ENCODE measurements at regions of chr2 and their contacts with region 1.

Region 1: DNA sequence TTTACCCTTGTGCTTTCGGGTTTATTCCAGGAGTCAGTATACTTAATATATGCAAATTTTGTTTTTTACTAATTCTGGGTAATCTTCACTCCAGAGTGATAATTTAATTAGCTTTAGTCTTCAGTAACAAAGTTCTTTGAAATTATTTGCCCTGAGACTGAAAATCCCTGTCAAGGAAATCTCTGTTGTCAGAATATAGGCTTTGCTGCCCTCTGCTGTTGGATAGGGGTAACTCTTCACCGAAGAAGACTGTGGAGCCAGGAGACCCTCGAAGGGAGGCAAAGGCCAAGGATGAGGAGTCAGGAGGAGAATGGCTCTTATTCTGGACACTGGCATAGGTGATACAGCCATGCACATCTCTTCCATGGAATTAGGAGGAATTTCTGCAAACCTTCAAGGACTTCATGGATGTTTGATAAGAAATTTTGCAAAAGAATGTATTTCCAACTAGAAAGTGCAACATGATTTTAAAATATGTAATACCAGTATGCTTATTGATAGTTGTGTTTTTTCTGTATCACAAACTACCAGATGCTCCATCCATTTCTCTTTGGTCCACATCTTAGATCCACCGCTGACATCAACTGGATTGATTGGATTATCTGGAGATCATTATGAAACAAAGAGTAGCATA is 182.3 kb downstream of the RDH14 start:
- DNase-seq: peak; percentile 24
- H3K4me3 ChIP-seq: no peak overlapping the region
- H3K27ac ChIP-seq: no peak overlapping the region
- H3K4me1 ChIP-seq: no peaks in the 10 kb centered on the region
- H3K27me3 ChIP-seq: no peaks in the 10 kb centered on the region
- CTCF ChIP-seq: peak; percentile 63

Region 2: GRCh38 chr2:17719562-17720371 is 658.4 kb before region 1 on chr2:
- intact Hi-C with region 1: loop called (anchors 5 kb)
- DNase-seq: no peak
- H3K4me3 ChIP-seq: no peak overlapping the region
- H3K27ac ChIP-seq: no peak overlapping the region
- H3K4me1 ChIP-seq: no peaks in the 10 kb centered on the region
- H3K27me3 ChIP-seq: no peaks in the 10 kb centered on the region
- CTCF ChIP-seq: peak; percentile 88

Region 3: GRCh38 chr2:17851731-17852585 is 526.2 kb before region 1 on chr2:
- intact Hi-C with region 1: loop called (anchors 10 kb)
- DNase-seq: peak; percentile 49
- H3K4me3 ChIP-seq: no peak overlapping the region
- H3K27ac ChIP-seq: no peak overlapping the region
- H3K4me1 ChIP-seq: no peaks in the 10 kb centered on the region
- H3K27me3 ChIP-seq: no peaks in the 10 kb centered on the region
- CTCF ChIP-seq: peak; percentile 87

Region 4: GRCh38 chr2:18186816-18187613 is 191.1 kb before region 1 on chr2:
- intact Hi-C with region 1: loop called (anchors 10 kb)
- DNase-seq: no peak
- H3K4me3 ChIP-seq: no peak overlapping the region
- H3K27ac ChIP-seq: no peak overlapping the region
- H3K4me1 ChIP-seq: no peaks in the 10 kb centered on the region
- H3K27me3 ChIP-seq: no peaks in the 10 kb centered on the region
- CTCF ChIP-seq: no peak

Measured in colonic mucosa (tissue), 4 donors.